IMR-90 (cell line): ENCODE measurements at regions of chr1 and their contacts with region 1.

Region 1: GRCh38 chr1:43206600-43207228 is 34.6 kb downstream of the CFAP57 start:
- DNase-seq: peak; percentile 98
- ATAC-seq: peak; percentile 96
- H3K4me3 ChIP-seq: peak overlapping the region; percentile 31; the same call in 1 of the 2 replicates
- H3K27ac ChIP-seq: peak overlapping the region; percentile 97
- H3K4me1 ChIP-seq: peaks cover 18% of the 10 kb centered on the region
- H3K27me3 ChIP-seq: no peaks in the 10 kb centered on the region
- CTCF ChIP-seq: no peak
- POLR2A ChIP-seq: peak; percentile 62; the same call in 1 of the 2 replicates
- RAD21 ChIP-seq: peak; percentile 17; the same call in 1 of the 2 replicates

Region 2: DNA sequence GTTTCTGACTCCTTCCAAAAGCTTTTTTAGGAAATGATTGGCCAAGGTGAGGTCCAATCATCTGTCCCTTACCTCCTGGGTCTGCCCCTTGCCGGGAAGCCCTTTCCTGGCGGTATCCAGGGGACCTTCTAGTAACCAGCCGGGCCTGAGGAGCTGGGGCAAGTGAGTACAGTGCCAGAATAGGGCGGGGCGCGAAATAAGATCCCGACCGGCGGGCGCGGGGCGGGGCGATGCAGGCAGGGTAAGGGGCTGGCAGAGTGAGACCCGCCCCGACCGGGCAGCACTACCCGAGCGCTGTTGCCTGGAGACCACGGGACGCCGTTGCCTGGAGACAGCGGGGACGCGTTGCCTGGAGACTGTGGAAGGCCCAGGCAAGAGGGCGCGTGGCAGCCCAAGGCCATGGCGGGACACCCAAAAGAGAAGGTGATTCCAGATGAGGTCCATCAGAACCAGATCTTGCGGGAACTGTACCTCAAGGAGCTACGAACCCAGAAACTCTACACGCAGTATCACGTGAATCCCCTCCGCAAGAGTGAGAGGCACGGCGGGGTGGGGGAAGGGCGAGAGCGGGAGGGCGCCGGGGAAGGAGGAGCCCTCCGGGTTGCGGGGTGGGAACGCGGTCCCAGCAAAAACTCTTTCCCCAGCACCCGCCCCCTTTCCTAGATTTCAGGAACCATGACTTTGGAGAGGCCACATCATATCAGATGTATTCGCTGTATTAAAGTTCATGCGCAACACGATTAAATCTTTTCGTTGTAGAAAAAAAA is 59.0 kb before region 1 on chr1:
- CTCF ChIA-PET with region 1: no interaction called
- POLR2A ChIA-PET with region 1: no interaction called
- dilution Hi-C with region 1: no loop called
- in situ Hi-C with region 1: no loop called
- intact Hi-C with region 1: no loop called
- DNase-seq: peak; percentile 32
- ATAC-seq: peak; percentile 93
- H3K4me3 ChIP-seq: peak overlapping the region; percentile 70
- H3K27ac ChIP-seq: no peak overlapping the region
- H3K4me1 ChIP-seq: no peaks in the 10 kb centered on the region
- H3K27me3 ChIP-seq: peaks cover 30% of the 10 kb centered on the region
- CTCF ChIP-seq: no peak
- POLR2A ChIP-seq: no peak
- RAD21 ChIP-seq: no peak

Region 3: GRCh38 chr1:43171876-43172526 is 34.7 kb before region 1 on chr1 and contains the starts of genes CFAP57 and EBNA1BP2:
- CTCF ChIA-PET with region 1: no interaction called
- POLR2A ChIA-PET with region 1: interaction called, 5 read pairs
- dilution Hi-C with region 1: no loop called
- in situ Hi-C with region 1: no loop called
- intact Hi-C with region 1: loop called (anchors 1 kb)
- DNase-seq: peak; percentile 93
- ATAC-seq: peak; percentile 86
- H3K4me3 ChIP-seq: peak within 1 kb of the TSS; percentile 75
- H3K27ac ChIP-seq: peak within 1 kb of the TSS; percentile 60
- H3K4me1 ChIP-seq: no peaks in the 10 kb centered on the region
- H3K27me3 ChIP-seq: peaks cover 10% of the 10 kb centered on the region
- CTCF ChIP-seq: no peak
- POLR2A ChIP-seq: peak; percentile 78
- RAD21 ChIP-seq: 0 out of 2 replicates have a peak, but pooled peaks have one; percentile 1
- total RNA-seq, gene CFAP57: 0.28 and 0.36 TPM in 2 replicates
- total RNA-seq, gene EBNA1BP2: 135 and 173 TPM in 2 replicates